Lower lobe of right lung (tissue), 2 donors: ENCODE measurements at regions of chr3 and their contacts with region 1.

Region 1: DNA sequence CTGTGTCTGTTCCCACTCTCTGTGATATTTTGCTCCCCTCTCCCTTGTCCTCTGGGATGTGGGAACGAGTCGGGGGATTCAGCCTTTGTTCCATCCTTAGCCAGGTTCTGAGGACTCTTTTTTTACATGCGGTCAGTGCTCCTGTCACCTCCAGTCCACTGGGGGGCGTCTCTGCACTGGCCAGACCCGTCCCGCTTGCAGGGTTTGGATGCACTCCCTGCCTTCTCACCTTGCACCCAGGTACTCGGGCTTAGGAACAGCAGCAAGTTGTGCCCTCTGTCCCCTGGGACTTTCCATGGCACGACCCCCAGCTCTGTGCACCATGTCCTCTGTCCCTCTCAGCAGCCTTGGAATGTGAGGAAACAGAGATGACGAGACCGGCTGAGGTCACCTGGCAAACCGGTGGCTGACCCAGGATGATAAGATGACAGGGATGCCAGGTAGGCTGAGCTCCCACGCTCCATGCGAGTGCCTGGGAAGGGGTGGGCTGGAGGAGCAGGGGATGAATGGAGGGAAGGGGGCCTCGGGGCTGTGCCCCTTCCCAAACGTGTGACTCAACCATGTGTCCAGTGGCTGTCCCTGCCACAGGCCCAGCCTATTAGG is 27.3 kb upstream of the FGD5 start:
- DNase-seq: peak; percentile 66
- ATAC-seq: peak; percentile 74 to 78
- H3K4me3 ChIP-seq: no peak overlapping the region
- H3K27ac ChIP-seq: no peak overlapping the region
- H3K4me1 ChIP-seq: peaks cover 37% of the 10 kb centered on the region
- H3K27me3 ChIP-seq: no peaks in the 10 kb centered on the region
- CTCF ChIP-seq: peak; percentile 73

Region 2: GRCh38 chr3:14626881-14627411 is 164.5 kb before region 1 on chr3:
- intact Hi-C with region 1: no loop called
- DNase-seq: no peak
- ATAC-seq: no peak
- H3K4me3 ChIP-seq: no peak overlapping the region
- H3K27ac ChIP-seq: no peak overlapping the region
- H3K4me1 ChIP-seq: no peaks in the 10 kb centered on the region
- H3K27me3 ChIP-seq: no peaks in the 10 kb centered on the region
- CTCF ChIP-seq: no peak

Region 3: DNA sequence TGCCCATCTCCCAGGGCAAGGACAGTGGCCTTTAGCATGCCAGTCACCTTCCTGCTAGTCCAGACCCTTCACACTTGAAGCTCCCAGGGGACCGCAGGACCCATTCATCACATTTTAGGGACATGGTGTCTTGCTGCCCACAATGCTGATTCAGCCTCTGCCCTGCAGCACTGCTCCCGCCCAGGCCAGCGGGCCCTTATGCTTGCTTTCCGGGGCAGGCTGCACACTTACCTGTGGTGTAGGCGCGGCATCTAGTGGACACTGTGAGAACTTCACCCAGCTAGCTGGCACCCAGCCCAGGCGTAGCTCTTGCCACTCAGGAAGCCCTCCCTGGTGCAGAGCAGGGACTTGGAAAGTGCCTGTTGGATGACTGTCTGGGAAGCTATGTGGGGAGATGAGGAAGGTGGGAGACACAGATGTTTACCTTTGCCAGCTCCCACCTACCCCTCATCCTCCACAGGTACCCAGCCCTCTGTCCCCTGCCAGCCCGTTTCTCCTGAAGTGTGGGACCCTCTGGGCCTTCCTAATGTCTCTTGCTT is 129.7 kb after region 1 on chr3:
- intact Hi-C with region 1: loop called (anchors 10 kb)
- DNase-seq: peak; percentile 89
- ATAC-seq: peak; percentile 94 to 95
- H3K4me3 ChIP-seq: no peak overlapping the region
- H3K27ac ChIP-seq: no peak overlapping the region
- H3K4me1 ChIP-seq: peaks cover 10% of the 10 kb centered on the region
- H3K27me3 ChIP-seq: no peaks in the 10 kb centered on the region
- CTCF ChIP-seq: peak; percentile 97

Region 4: DNA sequence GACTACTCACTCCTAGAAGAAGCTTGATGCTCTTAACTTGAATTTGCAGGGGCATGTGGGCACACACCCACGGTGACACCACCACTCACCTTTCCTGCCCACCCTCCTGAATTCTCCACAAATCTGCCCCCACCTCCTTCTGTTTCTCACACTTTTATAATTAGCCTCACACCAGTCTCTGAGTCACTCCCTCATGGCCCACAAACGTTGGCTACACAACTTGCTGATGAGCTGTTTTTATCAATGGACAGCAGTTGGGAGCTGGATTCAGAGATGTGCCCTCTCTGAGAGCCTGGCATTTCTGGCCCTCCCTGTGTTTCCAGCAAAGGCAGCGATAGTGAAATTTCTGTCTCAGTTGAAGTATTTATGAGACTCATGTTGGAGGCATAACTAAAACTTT is 728.7 kb after region 1 on chr3:
- intact Hi-C with region 1: no loop called
- DNase-seq: no peak
- ATAC-seq: no peak
- H3K4me3 ChIP-seq: no peak overlapping the region
- H3K27ac ChIP-seq: no peak overlapping the region
- H3K4me1 ChIP-seq: no peaks in the 10 kb centered on the region
- H3K27me3 ChIP-seq: no peaks in the 10 kb centered on the region
- CTCF ChIP-seq: no peak